ENCODE measurements at regions of chr18 and their contacts with region 1.

Region 1: DNA sequence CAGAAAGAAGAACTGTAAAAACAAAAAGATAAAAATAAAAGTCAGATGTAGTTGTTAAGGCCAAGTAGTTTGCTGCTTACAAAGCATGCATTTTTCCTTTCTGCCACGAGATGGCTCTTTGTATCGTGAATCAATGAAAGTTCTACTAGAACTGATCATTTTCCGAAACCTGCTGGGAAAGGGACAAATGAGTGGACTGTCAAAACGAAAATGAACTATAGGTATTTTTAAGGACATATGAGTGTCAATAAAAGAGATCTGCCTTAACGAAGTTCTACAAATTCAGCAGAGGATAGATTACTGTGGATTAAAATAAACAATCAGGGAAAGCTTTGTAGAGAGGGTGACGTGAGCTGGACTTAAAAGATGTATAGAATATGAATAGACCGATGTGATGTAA is 15.0 kb upstream of the ELOA2 start:
- H3K4me3 ChIP-seq: no peak overlapping the region
- H3K27ac ChIP-seq: no peak overlapping the region
- H3K4me1 ChIP-seq: no peaks in the 10 kb centered on the region
- CTCF ChIP-seq: 0 out of 2 replicates have a peak, but pooled peaks have one; percentile 18

Region 2: GRCh38 chr18:46641917-46642316 is 408.6 kb before region 1 on chr18:
- CTCF ChIA-PET with region 1: no interaction called
- POLR2A ChIA-PET with region 1: no interaction called
- H3K4me3 ChIP-seq: no peak overlapping the region
- H3K27ac ChIP-seq: no peak overlapping the region
- H3K4me1 ChIP-seq: no peaks in the 10 kb centered on the region
- CTCF ChIP-seq: no peak

Region 3: GRCh38 chr18:47100214-47100831 is 49.9 kb after region 1 on chr18:
- CTCF ChIA-PET with region 1: interaction called, 11 read pairs
- POLR2A ChIA-PET with region 1: no interaction called
- H3K4me3 ChIP-seq: no peak overlapping the region
- H3K27ac ChIP-seq: no peak overlapping the region
- H3K4me1 ChIP-seq: no peaks in the 10 kb centered on the region
- CTCF ChIP-seq: peak; percentile 50; the same call in 1 of the 2 replicates

Region 4: GRCh38 chr18:47470936-47471335 is 420.5 kb after region 1 on chr18:
- CTCF ChIA-PET with region 1: no interaction called
- POLR2A ChIA-PET with region 1: no interaction called
- H3K4me3 ChIP-seq: no peak overlapping the region
- H3K27ac ChIP-seq: no peak overlapping the region
- H3K4me1 ChIP-seq: no peaks in the 10 kb centered on the region
- CTCF ChIP-seq: no peak